Right lobe of liver (tissue), 6 donors: ENCODE measurements at regions of chr12 and their contacts with region 1.

Region 1: DNA sequence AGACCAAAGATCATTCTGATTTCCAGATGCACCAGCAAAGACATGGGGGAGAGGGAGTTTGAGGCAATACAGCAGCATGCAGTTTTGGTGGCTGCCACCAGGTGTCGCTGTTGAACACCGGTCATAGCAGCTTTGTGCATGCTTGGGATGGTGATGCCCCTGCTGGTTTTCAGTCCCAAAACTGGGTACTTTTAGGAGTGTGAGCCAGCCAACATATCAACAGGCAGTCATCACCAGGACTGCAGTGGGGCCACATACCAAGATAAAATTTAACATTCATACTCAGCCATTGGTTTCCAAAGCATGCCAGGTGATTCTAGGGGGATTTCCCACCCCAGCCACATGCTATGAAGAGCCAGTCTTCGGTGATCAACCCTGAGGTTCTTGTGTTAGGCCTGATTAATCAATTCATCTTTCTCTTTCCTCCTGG is 64.2 kb downstream of the PHETA1 start:
- DNase-seq: no peak
- ATAC-seq: peak in 1 of 4 donors; percentile 13
- H3K4me3 ChIP-seq: no peak overlapping the region
- H3K27ac ChIP-seq: no peak overlapping the region
- H3K4me1 ChIP-seq: no peaks in the 10 kb centered on the region
- H3K27me3 ChIP-seq: no peaks in the 10 kb centered on the region
- CTCF ChIP-seq: peak; percentile 41 to 55 (median 50)
- POLR2A ChIP-seq: no peak

Region 2: DNA sequence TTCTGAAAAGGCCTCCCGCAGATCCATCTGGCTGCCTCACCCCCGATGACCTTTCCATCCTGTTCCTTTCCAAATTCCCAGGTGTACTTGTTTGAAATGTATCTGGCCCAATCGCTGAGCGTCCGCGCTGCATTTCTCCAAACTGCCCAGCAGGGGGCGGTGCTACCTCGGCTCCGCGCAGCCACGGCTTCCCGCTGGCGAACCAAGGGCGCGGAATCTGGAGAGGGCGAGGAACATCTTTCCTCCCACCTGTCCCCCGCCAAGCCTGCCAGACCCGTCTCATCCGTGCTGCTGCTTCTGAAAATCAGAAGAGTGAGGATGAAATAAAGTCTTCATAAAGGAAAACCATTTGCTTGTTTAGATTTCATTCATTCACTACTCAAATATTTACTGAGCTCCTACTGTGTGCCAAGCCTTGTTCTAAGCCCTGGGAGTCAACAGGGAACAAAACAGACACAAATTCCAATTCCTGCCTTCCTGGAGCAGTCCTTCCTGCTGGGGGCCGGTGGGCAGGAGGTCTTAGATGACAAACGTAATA is 367.5 kb before region 1 on chr12:
- intact Hi-C with region 1: loop called in 1 of 2 experiments (anchors 10 kb)
- DNase-seq: peak; percentile 63 to 71 (median 64)
- ATAC-seq: peak; percentile 89 to 96 (median 92)
- H3K4me3 ChIP-seq: no peak overlapping the region
- H3K27ac ChIP-seq: no peak overlapping the region
- H3K4me1 ChIP-seq: peaks cover 0 to 5% (median 0%) of the 10 kb centered on the region in 4 donors
- H3K27me3 ChIP-seq: no peaks in the 10 kb centered on the region
- CTCF ChIP-seq: peak; percentile 76 to 97 (median 96)
- POLR2A ChIP-seq: no peak

Region 3: DNA sequence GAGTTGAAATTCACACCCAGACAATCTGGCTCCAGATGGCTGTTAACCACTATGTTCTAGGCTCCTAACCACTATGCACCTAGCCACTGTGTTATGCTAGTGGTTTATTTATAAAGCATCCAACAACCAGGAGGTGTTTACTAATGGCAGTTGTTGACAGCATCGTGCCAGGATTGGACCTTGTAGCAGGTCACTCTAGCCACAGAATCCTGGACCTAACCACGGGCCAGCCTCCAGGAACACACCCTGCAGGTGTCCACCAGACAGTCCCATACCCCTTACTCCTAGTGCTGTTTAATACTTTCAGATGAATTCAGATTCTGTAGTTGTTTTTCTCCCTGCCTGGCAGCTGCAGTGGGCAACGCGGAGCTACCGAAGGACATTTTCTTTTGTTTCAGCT is 274.9 kb before region 1 on chr12:
- intact Hi-C with region 1: loop called in 1 of 2 experiments (anchors 5 kb)
- DNase-seq: peak in 1 of 3 donors; percentile 61
- ATAC-seq: peak; percentile 66 to 82 (median 76)
- H3K4me3 ChIP-seq: no peak overlapping the region
- H3K27ac ChIP-seq: no peak overlapping the region
- H3K4me1 ChIP-seq: peaks cover 0 to 19% (median 9%) of the 10 kb centered on the region in 4 donors
- H3K27me3 ChIP-seq: no peaks in the 10 kb centered on the region
- CTCF ChIP-seq: no peak
- POLR2A ChIP-seq: no peak

Region 4: DNA sequence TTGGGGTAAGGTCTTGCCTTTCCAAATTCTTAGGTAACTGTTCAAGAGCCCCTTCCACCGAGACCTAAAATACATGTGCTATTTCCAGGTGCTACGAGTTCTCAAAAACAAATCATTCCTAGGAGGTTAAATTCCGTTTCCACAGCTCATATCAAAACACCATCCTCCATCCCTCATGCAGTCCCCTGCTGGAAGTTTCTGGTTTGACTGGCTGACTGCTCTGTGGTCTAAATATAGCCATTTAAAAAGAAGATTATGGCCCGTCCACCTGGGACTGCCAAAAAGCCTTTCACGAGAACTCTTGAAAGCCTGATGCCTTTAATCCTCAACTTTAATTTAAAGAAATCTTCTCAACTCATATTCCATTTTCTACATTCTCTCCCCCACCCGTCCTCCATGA is 182.8 kb before region 1 on chr12:
- intact Hi-C with region 1: no loop called
- DNase-seq: no peak
- ATAC-seq: no peak
- H3K4me3 ChIP-seq: no peak overlapping the region
- H3K27ac ChIP-seq: no peak overlapping the region
- H3K4me1 ChIP-seq: no peaks in the 10 kb centered on the region
- H3K27me3 ChIP-seq: no peaks in the 10 kb centered on the region
- CTCF ChIP-seq: no peak
- POLR2A ChIP-seq: no peak

Region 5: GRCh38 chr12:111138016-111138415 is 166.6 kb before region 1 on chr12:
- intact Hi-C with region 1: no loop called
- DNase-seq: no peak
- ATAC-seq: peak in 2 of 4 donors; percentile 13 to 30
- H3K4me3 ChIP-seq: no peak overlapping the region
- H3K27ac ChIP-seq: no peak overlapping the region
- H3K4me1 ChIP-seq: no peaks in the 10 kb centered on the region
- H3K27me3 ChIP-seq: no peaks in the 10 kb centered on the region
- CTCF ChIP-seq: no peak
- POLR2A ChIP-seq: no peak